ENCODE measurements at regions of chr2 and their contacts with region 1.

Region 1: DNA sequence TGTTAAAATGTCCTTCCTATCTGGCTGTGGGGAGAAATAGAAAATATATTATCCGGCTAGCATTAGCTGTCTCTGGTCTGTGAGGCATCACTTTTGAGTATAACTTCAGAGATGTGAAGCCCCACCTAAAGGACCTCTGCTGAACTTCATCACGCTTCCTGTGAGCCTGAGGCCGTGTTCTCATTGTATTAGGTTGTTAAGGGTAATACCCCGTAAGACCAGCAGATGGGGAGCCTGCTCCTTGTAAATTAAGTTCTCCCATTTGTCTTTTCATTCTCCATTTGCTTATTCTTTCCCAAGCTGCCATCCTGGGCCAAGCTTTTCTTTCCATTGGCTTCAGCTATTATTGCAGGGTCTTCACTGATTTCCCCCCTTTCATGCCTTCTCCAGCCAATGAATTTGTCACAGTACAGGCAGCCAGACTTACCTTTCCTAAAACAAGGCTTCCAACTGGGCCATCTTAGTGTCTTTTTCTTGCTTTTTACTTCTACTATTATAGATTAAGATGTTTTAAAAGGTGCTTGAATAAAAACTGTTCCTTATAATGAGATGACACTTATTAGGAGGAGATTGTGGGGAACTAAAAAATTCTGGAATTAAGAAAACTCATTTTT is 12.4 kb downstream of the NIF3L1 start:
- DNase-seq: no peak
- H3K4me3 ChIP-seq: no peak overlapping the region
- H3K27ac ChIP-seq: peak overlapping the region; percentile 25
- H3K4me1 ChIP-seq: peaks cover 35% of the 10 kb centered on the region
- H3K27me3 ChIP-seq: no peaks in the 10 kb centered on the region
- CTCF ChIP-seq: peak; percentile 80

Region 2: DNA sequence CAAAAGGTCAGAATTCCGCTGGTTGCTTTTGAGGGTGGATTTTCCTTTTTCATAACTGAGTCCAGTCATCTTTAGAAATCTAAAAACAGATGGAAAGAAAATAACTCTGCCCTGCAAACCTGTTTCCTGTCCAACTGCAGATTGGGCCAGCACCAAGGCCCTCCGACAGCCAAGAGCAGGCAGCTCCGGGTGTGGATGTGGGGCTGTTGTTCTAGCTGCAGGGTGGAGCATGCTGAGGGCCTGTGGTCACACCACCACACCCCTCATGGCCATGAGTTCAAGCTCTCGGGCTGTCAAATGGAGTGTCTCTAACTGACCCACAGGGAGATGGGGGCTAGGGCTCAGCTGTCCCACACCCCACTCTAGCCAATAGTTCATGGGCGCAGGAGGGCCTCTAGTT is 159.1 kb before region 1 on chr2:
- intact Hi-C with region 1: no loop called
- DNase-seq: peak; percentile 79
- H3K4me3 ChIP-seq: no peak overlapping the region
- H3K27ac ChIP-seq: peak overlapping the region; percentile 83
- H3K4me1 ChIP-seq: peaks cover 22% of the 10 kb centered on the region
- H3K27me3 ChIP-seq: peaks cover 4% of the 10 kb centered on the region
- CTCF ChIP-seq: no peak

Region 3: DNA sequence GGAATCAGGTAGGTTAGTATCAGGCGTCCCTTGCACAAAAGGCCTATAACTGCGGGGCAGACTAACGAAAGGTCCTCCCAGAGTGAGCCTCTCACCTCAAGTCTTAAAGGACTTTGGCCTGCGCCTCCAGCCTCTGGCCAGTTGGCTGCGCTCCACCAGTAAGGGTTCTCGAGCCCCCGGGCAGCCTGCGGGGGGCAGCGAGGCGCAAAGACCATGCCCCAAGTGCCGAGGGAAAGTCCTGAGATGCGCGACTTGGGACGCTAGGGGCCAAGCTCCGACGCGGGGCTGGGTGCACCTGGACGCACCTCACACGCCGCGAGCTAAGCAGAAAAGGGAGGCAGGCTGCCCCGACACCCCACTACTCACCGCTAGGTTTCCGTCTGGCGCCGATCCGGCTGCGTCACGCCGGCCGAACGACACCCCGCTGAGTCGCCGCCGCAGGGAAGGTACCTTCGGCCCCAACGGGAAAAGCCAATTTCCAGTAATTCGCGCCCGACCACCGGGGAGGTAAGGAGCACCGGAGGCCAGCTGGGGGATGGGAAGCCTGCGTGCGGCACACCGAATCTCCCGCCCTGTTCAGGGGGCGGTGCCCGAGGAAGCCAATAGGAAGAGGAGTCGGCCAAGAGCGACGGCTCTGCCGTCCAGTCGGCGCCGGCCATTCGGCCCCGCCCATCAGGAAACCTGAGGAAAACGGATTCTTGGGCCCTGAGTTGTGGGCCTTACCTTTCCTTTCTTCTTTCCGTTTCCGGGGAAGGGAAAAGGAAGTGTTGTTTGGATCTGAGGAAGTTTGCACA is 61.8 kb after region 1 on chr2 and contains the start of gene ORC2:
- intact Hi-C with region 1: no loop called
- DNase-seq: peak; percentile 93
- H3K4me3 ChIP-seq: peak within 1 kb of the TSS; percentile 89
- H3K27ac ChIP-seq: peak within 1 kb of the TSS; percentile 95
- H3K4me1 ChIP-seq: peaks cover 79% of the 10 kb centered on the region
- H3K27me3 ChIP-seq: no peaks in the 10 kb centered on the region
- CTCF ChIP-seq: peak; percentile 70
- total RNA-seq, gene ORC2: 24.5 TPM

Region 4: GRCh38 chr2:201059961-201060755 is 158.6 kb after region 1 on chr2:
- intact Hi-C with region 1: loop called (anchors 10 kb)
- DNase-seq: no peak
- H3K4me3 ChIP-seq: no peak overlapping the region
- H3K27ac ChIP-seq: no peak overlapping the region
- H3K4me1 ChIP-seq: peaks cover 38% of the 10 kb centered on the region
- H3K27me3 ChIP-seq: no peaks in the 10 kb centered on the region
- CTCF ChIP-seq: no peak